ENCODE measurements at regions of chr9 and their contacts with region 1.

Region 1: DNA sequence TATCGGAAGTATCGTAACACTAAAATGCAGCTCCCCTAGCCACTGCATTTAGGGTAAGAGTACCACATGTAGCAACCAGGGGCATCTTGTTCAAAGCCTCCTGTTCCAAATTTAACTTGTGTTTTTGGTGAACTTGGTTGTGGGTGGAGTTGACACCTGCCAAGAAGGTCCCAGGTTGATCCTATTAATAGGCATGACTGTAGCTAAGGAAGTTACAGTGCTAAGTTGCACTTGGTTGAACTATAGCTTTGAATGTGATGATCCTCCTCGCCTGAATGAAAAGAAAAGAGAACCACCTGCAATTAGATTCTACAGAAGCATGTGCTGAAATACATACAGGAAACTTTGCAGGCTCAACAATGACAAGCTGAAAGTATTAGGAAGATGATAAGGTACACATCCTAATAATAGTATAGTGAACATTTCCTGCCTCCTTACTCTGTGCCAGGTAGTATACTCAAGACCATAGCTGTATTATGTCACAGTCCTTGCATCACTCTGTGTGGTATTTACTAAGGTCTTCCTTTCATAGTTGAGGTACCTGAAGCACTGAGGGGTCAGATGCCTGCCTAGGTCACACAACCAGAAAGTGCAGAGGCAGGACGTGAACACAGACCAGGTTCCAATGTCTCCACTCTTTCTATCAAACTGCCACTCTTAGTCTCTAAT is 64.5 kb upstream of the PIP5K1B start:
- DNase-seq: no peak
- H3K4me3 Mint-ChIP-seq: no peak overlapping the region
- H3K27ac Mint-ChIP-seq: no peak overlapping the region
- H3K4me1 Mint-ChIP-seq: peaks cover 2% of the 10 kb centered on the region
- H3K27me3 Mint-ChIP-seq: peaks cover 4% of the 10 kb centered on the region

Region 2: DNA sequence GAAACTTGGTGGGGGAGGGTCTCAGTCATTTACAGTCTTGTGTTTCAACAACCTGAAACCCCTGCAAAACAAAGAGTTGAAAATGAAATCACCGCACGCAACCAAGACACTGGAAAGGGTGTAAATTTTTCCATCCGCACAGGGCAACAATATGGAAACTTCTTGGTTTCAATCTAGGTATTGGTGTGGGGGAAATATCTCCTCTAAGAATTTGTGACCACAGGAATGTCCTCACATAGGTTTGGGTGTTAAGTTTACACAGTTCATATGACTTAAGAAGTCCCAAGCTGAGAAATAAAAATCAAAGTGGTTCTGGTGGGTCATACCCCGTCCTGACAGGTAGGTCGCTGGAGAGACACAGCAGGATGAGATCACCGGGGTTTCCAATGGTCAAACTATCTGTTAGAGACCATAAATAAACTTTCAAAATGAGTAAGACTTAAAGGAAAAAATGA is 12.6 kb after region 1 on chr9:
- CTCF ChIA-PET with region 1: no interaction called
- POLR2A ChIA-PET with region 1: no interaction called
- intact Hi-C with region 1: loop called (anchors 1 kb)
- DNase-seq: peak; percentile 51
- H3K4me3 Mint-ChIP-seq: no peak overlapping the region
- H3K27ac Mint-ChIP-seq: peak overlapping the region; percentile 53
- H3K4me1 Mint-ChIP-seq: peaks cover 28% of the 10 kb centered on the region
- H3K27me3 Mint-ChIP-seq: peaks cover 23% of the 10 kb centered on the region